ENCODE measurements at regions of chr10 and their contacts with region 1.

Region 1: DNA sequence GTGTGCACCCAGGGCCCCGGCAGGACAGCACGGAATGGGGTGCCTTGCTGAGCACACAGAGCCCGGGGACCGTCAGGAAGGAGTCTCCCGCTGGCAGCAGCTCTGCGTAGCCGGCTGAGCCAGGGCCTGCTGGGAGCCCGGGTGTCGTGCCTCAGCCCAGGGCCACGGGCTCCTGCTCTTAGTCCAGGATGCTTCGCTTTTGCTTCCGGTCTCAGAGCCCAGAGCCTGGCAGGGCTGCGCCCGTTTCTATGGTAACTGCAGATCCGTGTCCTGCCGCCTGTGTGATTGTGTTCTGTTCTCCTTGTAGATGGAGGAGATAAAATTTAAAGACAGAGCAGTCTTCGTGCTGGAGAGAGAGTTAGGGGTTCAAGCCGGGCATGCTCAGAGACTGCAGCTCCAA is 53.7 kb upstream of the DPYSL4 start:
- DNase-seq: no peak
- ATAC-seq: no peak
- H3K4me3 ChIP-seq: no peak overlapping the region
- H3K27ac ChIP-seq: no peak overlapping the region
- H3K4me1 ChIP-seq: no peaks in the 10 kb centered on the region
- H3K27me3 ChIP-seq: peaks cover 0 to 9% (median 0%) of the 10 kb centered on the region in 7 donors
- CTCF ChIP-seq: no peak

Region 2: DNA sequence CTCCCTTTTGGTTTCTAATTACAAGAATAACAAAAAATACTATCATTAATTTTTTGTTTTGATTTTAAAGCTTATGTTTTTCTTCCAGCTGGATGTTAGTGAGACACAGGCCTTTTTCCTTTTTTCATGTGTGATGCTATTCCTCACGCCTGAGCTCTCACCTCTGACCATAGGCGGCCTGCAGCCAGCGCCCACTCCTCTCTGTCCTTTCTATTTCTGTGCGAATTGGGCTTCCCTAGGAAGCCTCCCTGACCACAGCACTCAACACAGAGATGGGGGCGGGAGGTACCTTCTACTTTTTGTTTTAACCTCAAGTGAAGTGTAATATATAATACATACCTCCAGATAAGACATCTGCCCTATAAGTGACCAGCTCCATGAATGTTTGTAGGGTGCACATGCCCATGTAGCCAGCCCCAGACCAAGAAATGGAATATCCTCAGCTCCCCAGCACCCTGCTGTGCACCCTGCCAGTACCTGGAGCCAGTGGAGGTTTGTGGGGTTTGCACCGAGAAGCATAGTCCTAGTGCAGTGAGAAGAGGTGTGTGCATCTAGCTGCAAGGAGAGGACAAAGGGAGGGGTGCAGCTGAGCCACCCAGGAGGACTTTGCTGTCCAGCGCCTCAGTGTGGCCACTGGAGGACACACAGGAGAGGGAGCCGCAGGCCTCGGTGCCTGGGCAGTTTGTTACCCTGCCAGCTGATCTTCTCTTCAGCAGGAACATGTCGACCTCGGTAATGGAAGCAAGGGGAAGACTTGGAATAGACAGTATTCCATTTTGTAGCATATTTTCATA is 189.8 kb before region 1 on chr10:
- intact Hi-C with region 1: no loop called
- DNase-seq: no peak
- ATAC-seq: peak in 6 of 8 donors; percentile 71 to 86 (median 74)
- H3K4me3 ChIP-seq: no peak overlapping the region
- H3K27ac ChIP-seq: no peak overlapping the region
- H3K4me1 ChIP-seq: peaks cover 0 to 6% (median under 1%) of the 10 kb centered on the region in 9 donors
- H3K27me3 ChIP-seq: no peaks in the 10 kb centered on the region
- CTCF ChIP-seq: peak; percentile 8 to 62 (median 44)

Region 3: DNA sequence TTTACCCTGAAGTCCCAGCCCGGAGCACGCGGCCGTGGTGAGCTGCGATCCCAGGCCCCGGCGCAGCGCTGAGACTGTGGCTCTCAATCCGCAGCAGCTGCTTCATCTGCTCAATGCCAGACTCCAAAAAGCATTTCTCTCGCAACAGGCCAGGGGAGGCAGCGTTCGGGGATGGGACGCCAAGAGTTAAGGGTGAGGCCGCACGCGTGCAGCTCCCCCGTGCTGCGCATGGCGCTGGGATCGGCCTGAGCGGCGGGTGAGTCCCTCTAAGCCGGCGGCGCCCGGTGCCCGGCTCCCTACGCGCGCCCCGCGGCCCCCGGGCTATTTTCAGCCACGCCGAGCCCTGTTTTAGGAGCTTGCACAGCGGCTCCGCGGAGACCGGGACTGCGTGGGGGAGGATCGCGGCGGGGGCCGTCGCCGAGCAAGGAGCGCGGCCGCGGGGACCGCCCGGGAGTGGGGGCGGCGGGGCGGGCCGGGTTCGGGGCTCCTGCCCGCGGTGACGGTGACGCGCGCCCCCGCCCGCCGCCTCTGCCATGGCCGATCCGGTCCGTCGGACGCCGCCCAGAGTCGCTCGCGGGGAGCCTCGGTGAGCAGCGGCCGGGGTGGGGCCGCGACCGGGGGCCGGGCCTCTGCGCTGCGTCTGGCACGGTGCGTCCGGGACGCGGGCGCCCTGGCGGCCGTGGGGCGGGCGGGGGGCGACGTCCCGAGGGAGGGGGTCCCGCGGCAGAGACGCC is 96.7 kb before region 1 on chr10:
- intact Hi-C with region 1: loop called in 2 of 10 experiments (anchors 5 to 10 kb)
- DNase-seq: peak in 1 of 2 donors; percentile 37
- ATAC-seq: peak; percentile 63 to 76 (median 70)
- H3K4me3 ChIP-seq: peak overlapping the region in 9 of 10 donors; percentile 37 to 53 (median 49)
- H3K27ac ChIP-seq: peak overlapping the region in 5 of 10 donors; percentile 14 to 51 (median 39)
- H3K4me1 ChIP-seq: peaks cover 0 to 12% (median 5%) of the 10 kb centered on the region in 9 donors
- H3K27me3 ChIP-seq: peaks cover 0 to 75% (median 57%) of the 10 kb centered on the region in 7 donors
- CTCF ChIP-seq: no peak

Region 4: GRCh38 chr10:132044803-132045202 is 88.2 kb before region 1 on chr10:
- intact Hi-C with region 1: loop called in 1 of 10 experiments (anchors 5 kb)
- DNase-seq: no peak
- ATAC-seq: no peak
- H3K4me3 ChIP-seq: no peak overlapping the region
- H3K27ac ChIP-seq: no peak overlapping the region
- H3K4me1 ChIP-seq: no peaks in the 10 kb centered on the region
- H3K27me3 ChIP-seq: peaks cover 0 to 23% (median 18%) of the 10 kb centered on the region in 7 donors
- CTCF ChIP-seq: no peak

Measured in heart right ventricle (tissue), 16 donors.